ENCODE measurements at regions of chr17 and their contacts with region 1.

Region 1: DNA sequence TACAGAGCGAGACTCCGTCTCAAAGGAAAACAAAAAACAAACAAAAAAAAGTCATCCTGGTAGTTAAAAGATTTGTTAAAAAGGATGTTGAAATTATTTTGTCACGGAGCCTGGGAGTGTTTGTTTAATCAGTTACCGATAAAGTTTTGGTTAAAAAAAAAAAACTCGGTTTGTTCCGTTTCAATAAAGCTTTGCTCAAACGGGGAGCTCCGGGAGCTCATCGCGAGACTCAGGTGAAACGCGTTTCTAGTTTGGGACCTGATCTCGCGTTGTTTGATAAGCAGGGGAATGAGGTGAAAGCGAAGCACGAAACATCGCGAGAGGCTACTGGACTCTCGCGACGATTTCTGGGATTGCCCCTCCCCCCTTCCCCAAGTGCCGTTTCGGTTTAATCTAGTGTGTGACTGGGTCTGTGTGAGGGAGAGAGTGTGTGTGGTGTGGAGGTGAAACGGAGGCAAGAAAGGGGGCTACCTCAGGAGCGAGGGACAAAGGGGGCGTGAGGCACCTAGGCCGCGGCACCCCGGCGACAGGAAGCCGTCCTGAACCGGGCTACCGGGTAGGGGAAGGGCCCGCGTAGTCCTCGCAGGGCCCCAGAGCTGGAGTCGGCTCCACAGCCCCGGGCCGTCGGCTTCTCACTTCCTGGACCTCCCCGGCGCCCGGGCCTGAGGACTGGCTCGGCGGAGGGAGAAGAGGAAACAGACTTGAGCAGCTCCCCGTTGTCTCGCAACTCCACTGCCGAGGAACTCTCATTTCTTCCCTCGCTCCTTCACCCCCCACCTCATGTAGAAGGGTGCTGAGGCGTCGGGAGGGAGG is at the start of gene CDK12:
- DNase-seq: peak; percentile 96
- H3K4me3 Mint-ChIP-seq: peak within 1 kb of the TSS; percentile 87
- H3K27ac Mint-ChIP-seq: peak within 1 kb of the TSS; percentile 93
- H3K4me1 Mint-ChIP-seq: peaks cover 27% of the 10 kb centered on the region
- H3K27me3 Mint-ChIP-seq: no peaks in the 10 kb centered on the region
- total RNA-seq, gene CDK12: 68.1 to 70.7 TPM

Region 2: DNA sequence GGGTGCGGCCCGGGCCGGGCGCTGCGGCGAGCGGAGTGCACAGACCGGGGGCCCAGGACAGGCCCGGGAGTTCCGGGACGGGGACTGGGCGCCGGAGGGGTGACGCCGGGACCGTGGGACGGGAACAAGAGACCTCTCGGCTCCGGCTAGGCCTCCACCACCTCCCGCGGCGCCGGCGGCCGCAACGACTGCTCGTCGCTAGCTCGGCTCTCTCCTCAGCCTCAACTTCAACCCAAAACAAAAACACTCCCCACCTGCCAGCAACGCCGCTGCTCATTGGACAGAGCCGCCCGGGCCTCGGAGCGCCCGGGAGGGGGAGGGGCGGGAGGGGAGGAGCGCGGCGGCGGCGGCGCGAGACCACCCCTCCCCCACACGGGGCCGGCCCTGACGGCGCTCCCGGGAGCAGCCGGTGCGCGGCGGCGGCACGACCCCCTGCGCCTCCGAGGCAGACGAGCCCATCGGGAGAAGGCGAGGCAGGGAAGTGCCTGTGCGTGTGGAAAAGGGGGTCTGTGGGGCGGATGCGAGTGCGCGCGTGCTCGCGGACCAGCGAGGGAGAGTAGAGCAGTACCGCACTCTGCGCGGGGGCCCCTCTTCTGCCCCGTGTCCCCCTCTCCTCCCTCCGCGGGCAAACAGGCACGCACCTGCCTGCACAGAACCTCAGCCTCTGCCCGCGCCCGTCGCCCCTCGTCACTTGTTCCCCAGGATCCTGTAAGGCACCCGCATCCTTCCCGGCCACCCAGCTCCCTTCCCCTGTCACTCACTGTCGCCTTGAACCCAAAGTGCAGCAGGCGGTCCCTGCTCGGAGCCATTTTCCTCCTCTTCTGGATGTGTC is 59.7 kb before region 1 on chr17 and contains the start of gene FBXL20:
- CTCF ChIA-PET with region 1: no interaction called
- POLR2A ChIA-PET with region 1: interaction called, 30 read pairs
- DNase-seq: peak; percentile 94
- H3K4me3 Mint-ChIP-seq: peak within 1 kb of the TSS; percentile 97
- H3K27ac Mint-ChIP-seq: peak within 1 kb of the TSS; percentile 96
- H3K4me1 Mint-ChIP-seq: peaks cover 46% of the 10 kb centered on the region
- H3K27me3 Mint-ChIP-seq: no peaks in the 10 kb centered on the region
- total RNA-seq, gene FBXL20: 17.5 to 18.4 TPM